ENCODE measurements at regions of chr22 and their contacts with region 1.

Region 1: DNA sequence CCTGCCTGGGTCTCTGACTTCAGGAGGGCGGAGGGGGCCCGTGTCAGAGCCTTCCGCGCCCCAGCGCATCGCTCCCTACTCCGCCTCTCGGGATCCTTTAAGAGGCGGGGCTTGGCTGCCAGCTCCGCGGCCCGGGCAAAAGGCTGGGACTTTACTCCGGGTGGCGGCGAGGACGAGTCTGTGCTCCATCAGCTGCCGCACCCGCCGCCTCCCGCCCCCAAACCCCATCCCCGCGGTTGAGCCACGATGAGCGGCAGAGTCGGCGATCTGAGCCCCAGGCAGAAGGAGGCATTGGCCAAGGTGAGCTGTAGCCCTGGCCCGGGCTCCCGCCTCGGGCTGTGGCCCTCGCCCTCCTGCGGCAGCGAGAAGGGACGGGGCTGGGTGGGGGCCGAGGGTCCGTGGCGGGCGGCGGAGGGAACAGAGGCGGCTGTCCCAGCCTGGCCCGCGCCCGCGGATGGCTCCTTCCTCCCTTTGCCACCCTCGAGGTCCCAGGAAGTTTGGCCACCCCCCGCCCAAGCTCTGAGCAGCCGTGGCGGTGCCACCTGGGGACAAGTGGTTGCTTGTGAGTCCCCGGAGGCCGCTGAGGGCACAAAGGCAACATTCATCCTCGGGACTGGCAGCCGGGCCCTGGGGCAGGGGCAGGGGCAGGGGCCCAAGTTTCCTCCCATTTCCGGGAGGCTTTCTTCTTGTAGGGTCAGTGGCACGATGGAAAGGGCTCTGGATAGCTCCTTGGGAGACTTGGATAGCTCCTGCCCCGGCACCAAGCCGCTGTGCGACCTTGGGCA is at the start of gene SEC14L2:
- DNase-seq: no peak
- H3K4me3 ChIP-seq: peak within 1 kb of the TSS; percentile 82
- H3K27ac ChIP-seq: peak within 1 kb of the TSS; percentile 11
- H3K27me3 ChIP-seq: no peaks in the 10 kb centered on the region
- CTCF ChIP-seq: no peak
- polyA plus RNA-seq, gene SEC14L2: 15.8 and 17.7 TPM in 2 replicates

Region 2: GRCh38 chr22:30262917-30263741 is 133.9 kb before region 1 on chr22:
- CTCF ChIA-PET with region 1: no interaction called
- POLR2A ChIA-PET with region 1: no interaction called
- DNase-seq: no peak
- H3K4me3 ChIP-seq: peak overlapping the region; percentile 32
- H3K27ac ChIP-seq: no peak overlapping the region
- H3K27me3 ChIP-seq: no peaks in the 10 kb centered on the region
- CTCF ChIP-seq: peak; percentile 97

Region 3: DNA sequence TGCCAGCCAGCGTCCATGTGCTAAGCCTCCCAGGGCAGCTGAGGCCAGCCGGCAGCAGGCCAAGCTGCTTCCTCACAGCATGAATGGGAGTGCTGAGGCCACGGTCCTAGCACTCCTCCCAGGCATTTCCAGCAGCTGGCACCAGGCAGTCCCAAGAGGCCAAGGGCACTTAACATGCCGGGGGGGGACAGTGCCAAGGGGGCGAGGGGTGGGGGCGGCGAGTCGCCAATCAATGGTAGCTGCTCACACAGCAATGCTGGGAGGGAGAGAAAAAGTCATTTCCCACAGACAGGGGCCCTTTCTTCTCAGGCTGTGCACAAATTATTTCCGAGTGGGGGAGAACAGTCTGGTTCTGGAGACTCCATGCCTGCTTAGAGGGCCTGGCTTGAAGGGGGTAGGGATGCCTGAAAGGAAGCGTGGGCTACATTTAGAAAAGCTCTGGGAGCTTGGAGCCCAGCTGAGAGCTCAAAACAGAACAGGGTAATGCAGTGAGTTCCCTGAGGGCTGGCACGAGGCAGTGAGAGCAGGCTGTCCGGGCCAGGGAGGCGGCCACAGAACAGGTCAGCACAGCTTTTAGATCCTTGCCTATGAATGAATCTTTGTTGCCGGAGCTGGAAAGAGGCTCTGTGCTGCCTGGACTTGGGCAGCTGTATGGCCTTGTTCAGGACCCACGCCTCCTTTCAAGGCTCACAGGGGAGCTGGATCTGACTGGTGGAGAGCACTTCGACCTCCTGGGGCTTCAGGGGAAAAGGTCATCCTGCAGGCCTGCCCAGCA is 56.0 kb before region 1 on chr22:
- CTCF ChIA-PET with region 1: interaction called, 10 read pairs
- POLR2A ChIA-PET with region 1: no interaction called
- DNase-seq: no peak
- H3K4me3 ChIP-seq: no peak overlapping the region
- H3K27ac ChIP-seq: no peak overlapping the region
- H3K27me3 ChIP-seq: no peaks in the 10 kb centered on the region
- CTCF ChIP-seq: no peak

Region 4: GRCh38 chr22:30423982-30424963 is 27.2 kb after region 1 on chr22:
- CTCF ChIA-PET with region 1: interaction called, 4 read pairs
- POLR2A ChIA-PET with region 1: interaction called, 18 read pairs
- DNase-seq: peak; percentile 99
- H3K4me3 ChIP-seq: peak overlapping the region; percentile 61
- H3K27ac ChIP-seq: peak overlapping the region; percentile 99
- H3K27me3 ChIP-seq: no peaks in the 10 kb centered on the region
- CTCF ChIP-seq: no peak